ENCODE measurements at regions of chr20 and their contacts with region 1.

Region 1: DNA sequence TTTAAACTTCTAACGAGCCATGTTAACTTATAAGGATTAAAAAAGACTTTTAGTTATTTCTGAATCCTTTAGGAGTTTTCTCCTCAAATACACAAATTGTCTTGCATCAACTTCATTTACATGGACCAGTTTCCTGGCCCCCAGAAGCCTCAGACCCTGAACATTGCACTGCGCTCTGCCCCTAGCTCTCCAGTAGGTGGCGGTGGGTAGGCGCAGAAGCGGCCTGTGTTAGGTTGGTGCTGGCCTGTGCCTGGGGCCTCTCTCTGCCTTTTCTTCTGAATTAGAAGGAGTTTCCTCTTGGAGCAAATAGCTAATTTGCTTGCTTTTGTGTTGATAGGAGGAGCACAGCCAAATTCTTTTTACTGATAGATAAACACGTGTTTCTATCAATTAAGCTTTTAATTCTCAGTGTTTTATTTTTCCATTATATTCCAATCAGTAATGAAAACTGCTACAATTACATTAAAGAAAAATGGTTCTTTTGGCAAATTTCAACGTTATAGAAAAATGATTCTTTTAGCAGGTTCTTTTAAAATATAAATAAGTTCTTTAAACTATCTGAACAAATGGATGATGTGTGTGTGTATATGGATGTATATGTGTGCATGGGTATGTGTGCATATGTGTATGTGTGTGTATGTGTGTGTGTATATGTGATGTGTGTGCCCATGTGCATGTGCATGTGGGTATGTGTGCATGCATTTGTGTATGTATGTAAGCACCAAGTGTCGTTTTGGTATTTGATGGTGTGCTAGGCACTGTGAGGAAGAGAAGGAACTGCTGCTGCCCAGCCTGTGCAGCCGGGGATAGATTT is 44.5 kb downstream of the DTD1 start:
- DNase-seq: peak; percentile 74
- H3K4me3 ChIP-seq: peak overlapping the region in 1 of 2 experiments; percentile 37; a peak in 1 of 4 replicates
- H3K27ac ChIP-seq: no peak overlapping the region
- H3K4me1 ChIP-seq: peaks cover 5 to 12% of the 10 kb centered on the region in 2 experiments; a peak in 3 of 4 replicates
- H3K27me3 ChIP-seq: no peaks in the 10 kb centered on the region
- CTCF ChIP-seq: peak; percentile 98
- EP300 ChIP-seq: no peak
- RAD21 ChIP-seq: peak; percentile 95

Region 2: GRCh38 chr20:18621004-18621403 is 11.4 kb before region 1 on chr20:
- CTCF ChIA-PET with region 1: interaction called, 13 read pairs
- POLR2A ChIA-PET with region 1: no interaction called
- DNase-seq: no peak
- H3K4me3 ChIP-seq: no peak overlapping the region
- H3K27ac ChIP-seq: no peak overlapping the region
- H3K4me1 ChIP-seq: no peaks in the 10 kb centered on the region; a peak in 1 of 4 replicates
- H3K27me3 ChIP-seq: no peaks in the 10 kb centered on the region
- CTCF ChIP-seq: no peak
- EP300 ChIP-seq: no peak
- RAD21 ChIP-seq: no peak

Region 3: GRCh38 chr20:18650224-18650623 is 17.8 kb after region 1 on chr20:
- CTCF ChIA-PET with region 1: interaction called, 14 read pairs
- POLR2A ChIA-PET with region 1: no interaction called
- DNase-seq: no peak
- H3K4me3 ChIP-seq: no peak overlapping the region
- H3K27ac ChIP-seq: no peak overlapping the region
- H3K4me1 ChIP-seq: peaks cover 0 to 5% of the 10 kb centered on the region in 2 experiments; a peak in 1 of 4 replicates
- H3K27me3 ChIP-seq: no peaks in the 10 kb centered on the region
- CTCF ChIP-seq: no peak
- EP300 ChIP-seq: no peak
- RAD21 ChIP-seq: no peak

Region 4: GRCh38 chr20:18973529-18974173 is 341.2 kb after region 1 on chr20:
- CTCF ChIA-PET with region 1: no interaction called
- POLR2A ChIA-PET with region 1: no interaction called
- DNase-seq: no peak
- H3K4me3 ChIP-seq: no peak overlapping the region
- H3K27ac ChIP-seq: no peak overlapping the region
- H3K4me1 ChIP-seq: peaks cover 0 to 2% of the 10 kb centered on the region in 2 experiments; a peak in 1 of 4 replicates
- H3K27me3 ChIP-seq: no peaks in the 10 kb centered on the region
- CTCF ChIP-seq: no peak
- EP300 ChIP-seq: no peak
- RAD21 ChIP-seq: no peak